Calu3 (cell line): ENCODE measurements at regions of chr3 and their contacts with region 1.

Region 1: GRCh38 chr3:31531992-31532586 is 636 bp upstream of the STT3B start:
- DNase-seq: peak; percentile 99
- H3K4me3 Mint-ChIP-seq: no peak overlapping the region
- H3K27ac Mint-ChIP-seq: peak overlapping the region; percentile 96
- H3K4me1 Mint-ChIP-seq: peaks cover 9% of the 10 kb centered on the region
- H3K27me3 Mint-ChIP-seq: no peaks in the 10 kb centered on the region
- CTCF ChIP-seq: no peak

Region 2: GRCh38 chr3:31166249-31166885 is 365.7 kb before region 1 on chr3:
- CTCF ChIA-PET with region 1: no interaction called
- intact Hi-C with region 1: loop called (anchors 5 kb)
- DNase-seq: peak; percentile 22
- H3K4me3 Mint-ChIP-seq: no peak overlapping the region
- H3K27ac Mint-ChIP-seq: no peak overlapping the region
- H3K4me1 Mint-ChIP-seq: peaks cover 25% of the 10 kb centered on the region
- H3K27me3 Mint-ChIP-seq: no peaks in the 10 kb centered on the region
- CTCF ChIP-seq: no peak

Region 3: GRCh38 chr3:31275038-31275562 is 257.0 kb before region 1 on chr3:
- CTCF ChIA-PET with region 1: no interaction called
- intact Hi-C with region 1: loop called (anchors 5 kb)
- DNase-seq: peak; percentile 21
- H3K4me3 Mint-ChIP-seq: no peak overlapping the region
- H3K27ac Mint-ChIP-seq: peak overlapping the region; percentile 63
- H3K4me1 Mint-ChIP-seq: peaks cover 47% of the 10 kb centered on the region
- H3K27me3 Mint-ChIP-seq: no peaks in the 10 kb centered on the region
- CTCF ChIP-seq: no peak

Region 4: DNA sequence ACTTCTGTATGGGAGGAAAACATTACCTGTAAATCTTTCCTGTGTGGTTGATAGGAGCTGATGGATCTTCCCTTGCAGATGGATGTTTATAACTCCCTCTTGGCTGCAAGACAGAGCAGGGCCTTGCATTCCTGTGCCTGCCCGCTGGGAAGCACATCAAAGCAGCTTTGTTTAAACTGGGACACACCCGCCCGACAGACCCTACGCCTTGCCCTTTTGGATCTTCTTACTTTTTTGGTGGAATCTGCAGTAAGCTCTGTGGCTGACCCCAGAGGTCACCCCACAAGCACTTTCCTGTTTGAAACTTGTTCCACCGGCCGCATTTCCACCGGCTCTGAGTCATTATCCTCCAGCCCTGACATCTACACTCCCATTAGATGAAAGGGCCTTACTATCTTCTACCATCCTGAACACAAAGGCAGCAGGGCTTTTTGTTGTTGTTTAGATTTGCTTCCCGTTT is 243.4 kb before region 1 on chr3:
- CTCF ChIA-PET with region 1: interaction called, 4 read pairs
- intact Hi-C with region 1: loop called (anchors 5 kb)
- DNase-seq: peak; percentile 80
- H3K4me3 Mint-ChIP-seq: peak overlapping the region; percentile 4
- H3K27ac Mint-ChIP-seq: peak overlapping the region; percentile 39
- H3K4me1 Mint-ChIP-seq: peaks cover 54% of the 10 kb centered on the region
- H3K27me3 Mint-ChIP-seq: no peaks in the 10 kb centered on the region
- CTCF ChIP-seq: no peak

Region 5: DNA sequence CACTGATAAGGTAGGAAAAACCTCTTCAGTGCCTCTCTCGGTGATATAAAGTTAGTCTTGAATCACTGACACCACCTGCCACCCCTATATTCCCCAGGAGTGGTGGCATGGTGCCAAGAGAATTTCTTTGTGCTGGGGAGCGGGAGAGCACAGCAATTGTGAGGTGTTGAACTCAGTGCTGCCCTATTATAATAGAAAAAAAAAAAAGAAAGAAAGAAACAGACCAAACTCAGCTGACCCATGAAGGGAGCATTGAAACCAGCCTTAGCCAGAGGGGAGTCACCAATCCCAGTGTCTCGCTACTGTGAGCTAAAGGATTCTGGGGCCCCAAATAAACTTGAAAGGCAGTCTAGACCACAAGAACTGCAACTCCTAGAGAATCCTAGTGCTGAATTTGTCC is 200.8 kb before region 1 on chr3:
- CTCF ChIA-PET with region 1: no interaction called
- intact Hi-C with region 1: no loop called
- DNase-seq: no peak
- H3K4me3 Mint-ChIP-seq: no peak overlapping the region
- H3K27ac Mint-ChIP-seq: no peak overlapping the region
- H3K4me1 Mint-ChIP-seq: no peaks in the 10 kb centered on the region
- H3K27me3 Mint-ChIP-seq: no peaks in the 10 kb centered on the region
- CTCF ChIP-seq: no peak

Region 6: GRCh38 chr3:31377045-31377642 is 154.9 kb before region 1 on chr3:
- CTCF ChIA-PET with region 1: no interaction called
- intact Hi-C with region 1: loop called (anchors 10 kb)
- DNase-seq: peak; percentile 69
- H3K4me3 Mint-ChIP-seq: no peak overlapping the region
- H3K27ac Mint-ChIP-seq: peak overlapping the region; percentile 3
- H3K4me1 Mint-ChIP-seq: peaks cover 24% of the 10 kb centered on the region
- H3K27me3 Mint-ChIP-seq: no peaks in the 10 kb centered on the region
- CTCF ChIP-seq: no peak

Region 7: DNA sequence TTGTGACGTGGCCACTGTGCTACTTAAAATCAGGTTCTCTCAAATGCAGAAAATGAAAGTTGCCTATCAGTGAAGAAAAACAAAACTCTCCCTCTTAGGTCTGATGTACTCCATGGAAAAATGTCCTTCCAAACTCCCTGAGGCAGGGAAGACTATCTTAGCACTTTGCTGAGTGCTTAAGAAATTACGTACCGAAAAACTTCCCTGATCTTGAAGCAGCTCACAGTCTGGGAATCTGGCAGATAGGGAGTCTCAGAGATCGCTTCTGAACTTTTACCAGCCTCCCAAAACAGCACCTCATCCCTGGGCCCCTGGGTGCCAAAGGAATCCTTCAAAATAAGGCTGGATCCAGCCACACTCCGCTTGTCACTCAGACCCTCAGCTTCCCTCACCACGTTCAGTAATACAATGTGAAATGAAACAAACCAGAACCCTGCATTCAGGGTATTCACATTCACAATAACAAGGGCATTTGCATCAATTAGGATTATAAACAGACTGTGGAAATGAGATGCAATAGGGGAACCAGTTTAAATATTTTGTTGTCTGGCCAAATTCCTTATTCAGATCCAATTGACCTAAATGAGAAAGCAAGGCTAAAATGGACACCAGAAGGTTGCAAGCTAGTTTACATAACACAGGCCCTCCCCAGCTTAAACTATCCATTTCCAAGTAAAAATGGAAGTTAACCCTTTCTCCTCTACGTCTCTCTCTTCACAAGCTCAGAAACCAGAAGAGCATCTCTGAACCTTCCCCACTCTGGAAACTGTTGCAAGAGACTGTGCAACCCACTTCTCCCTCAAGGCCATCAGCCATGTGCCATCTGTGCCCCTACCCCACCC is 428.1 kb after region 1 on chr3:
- CTCF ChIA-PET with region 1: no interaction called
- intact Hi-C with region 1: no loop called
- DNase-seq: no peak
- H3K4me3 Mint-ChIP-seq: no peak overlapping the region
- H3K27ac Mint-ChIP-seq: peak overlapping the region; percentile 61
- H3K4me1 Mint-ChIP-seq: peaks cover 40% of the 10 kb centered on the region
- H3K27me3 Mint-ChIP-seq: no peaks in the 10 kb centered on the region
- CTCF ChIP-seq: no peak